Caco-2 (cell line): ENCODE measurements at regions of chr16 and their contacts with region 1.

Region 1: DNA sequence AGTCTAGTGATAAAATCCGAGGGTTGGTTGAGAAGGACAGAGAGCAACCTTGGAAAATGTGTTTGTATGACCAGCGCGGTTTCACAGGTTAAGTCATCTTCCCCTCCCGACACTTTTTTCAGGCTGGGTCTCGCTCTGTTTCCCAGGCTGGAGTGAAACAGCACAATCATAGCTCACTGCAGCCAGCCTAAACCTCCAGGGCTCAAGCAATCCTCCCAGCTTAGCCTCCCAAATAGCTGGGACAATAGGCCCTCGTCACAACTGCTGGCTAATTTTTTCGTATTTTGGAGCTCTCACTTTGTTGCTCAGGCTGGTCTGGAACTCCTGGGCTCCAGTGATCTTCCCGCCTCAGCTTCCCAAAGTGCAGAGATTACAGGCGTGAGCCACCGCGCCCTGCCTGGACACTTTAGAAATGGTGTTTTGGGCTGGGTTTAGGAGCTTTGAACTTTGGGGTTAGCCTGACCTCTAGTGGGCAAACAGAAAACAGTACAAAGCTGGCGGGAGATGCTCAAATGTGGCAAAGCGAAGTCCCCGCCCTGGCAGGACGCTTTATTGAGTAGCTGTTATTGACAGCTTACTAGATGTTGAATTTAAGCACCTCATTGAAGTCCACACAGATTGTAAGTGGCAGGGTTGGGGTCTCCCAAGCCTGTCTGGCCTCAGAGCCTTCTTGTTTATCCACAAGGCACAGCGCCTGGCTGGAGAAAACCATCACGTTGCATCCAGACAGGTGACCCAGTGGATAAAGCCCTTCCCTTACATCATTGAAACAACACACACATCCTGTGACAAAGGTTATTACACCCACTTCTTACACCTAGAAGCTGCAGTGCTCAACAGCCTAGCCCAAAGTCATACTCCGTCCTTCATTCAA is 34.7 kb upstream of the RBBP6 start:
- DNase-seq: peak; percentile 54 to 66
- H3K4me3 ChIP-seq: no peak overlapping the region
- H3K4me3 Mint-ChIP-seq: no peak overlapping the region
- H3K27ac Mint-ChIP-seq: no peak overlapping the region
- H3K4me1 ChIP-seq: peaks cover 5% of the 10 kb centered on the region; the same call in 1 of the 2 replicates
- H3K4me1 Mint-ChIP-seq: no peaks in the 10 kb centered on the region
- H3K27me3 ChIP-seq: no peaks in the 10 kb centered on the region
- H3K27me3 Mint-ChIP-seq: peaks cover 16% of the 10 kb centered on the region
- CTCF ChIP-seq: peak; percentile 78 to 83

Region 2: GRCh38 chr16:24041826-24042631 is 462.7 kb before region 1 on chr16:
- CTCF ChIA-PET with region 1: interaction called, 16 read pairs
- POLR2A ChIA-PET with region 1: no interaction called
- intact Hi-C with region 1: loop called (anchors 1 kb)
- DNase-seq: peak; percentile 56 to 73
- H3K4me3 ChIP-seq: no peak overlapping the region
- H3K4me3 Mint-ChIP-seq: no peak overlapping the region
- H3K27ac Mint-ChIP-seq: no peak overlapping the region
- H3K4me1 ChIP-seq: no peaks in the 10 kb centered on the region
- H3K4me1 Mint-ChIP-seq: no peaks in the 10 kb centered on the region
- H3K27me3 ChIP-seq: no peaks in the 10 kb centered on the region
- H3K27me3 Mint-ChIP-seq: peaks cover 2% of the 10 kb centered on the region
- CTCF ChIP-seq: peak; percentile 67 to 68

Region 3: DNA sequence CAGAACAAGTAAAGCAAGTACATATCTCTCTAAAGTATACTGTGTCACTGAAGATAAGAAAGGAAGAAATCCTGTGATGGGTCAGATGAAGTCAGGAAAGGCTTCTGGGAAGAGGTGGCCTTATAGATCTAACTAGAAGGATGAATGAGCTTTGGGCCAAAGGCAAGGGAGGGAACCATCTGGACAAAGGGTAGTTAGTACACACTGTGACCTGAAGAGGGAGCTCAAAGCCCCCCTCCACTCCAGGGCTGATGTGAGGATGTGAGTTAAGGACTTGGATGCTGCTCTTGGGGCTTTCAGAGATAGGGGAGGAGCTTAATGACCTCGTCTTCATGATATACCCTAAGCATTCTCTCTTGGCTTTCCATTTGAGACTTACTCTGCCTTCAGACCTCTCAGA is 433.9 kb before region 1 on chr16:
- CTCF ChIA-PET with region 1: interaction called, 11 read pairs
- POLR2A ChIA-PET with region 1: no interaction called
- intact Hi-C with region 1: no loop called
- DNase-seq: peak; percentile 11 to 38
- H3K4me3 ChIP-seq: no peak overlapping the region
- H3K4me3 Mint-ChIP-seq: no peak overlapping the region
- H3K27ac Mint-ChIP-seq: no peak overlapping the region
- H3K4me1 ChIP-seq: no peaks in the 10 kb centered on the region
- H3K4me1 Mint-ChIP-seq: no peaks in the 10 kb centered on the region
- H3K27me3 ChIP-seq: no peaks in the 10 kb centered on the region; the same call in 1 of the 2 replicates
- H3K27me3 Mint-ChIP-seq: peaks cover 10% of the 10 kb centered on the region
- CTCF ChIP-seq: peak; percentile 34 to 52

Region 4: GRCh38 chr16:24253192-24253591 is 251.5 kb before region 1 on chr16:
- CTCF ChIA-PET with region 1: interaction called, 5 read pairs
- POLR2A ChIA-PET with region 1: no interaction called
- intact Hi-C with region 1: loop called (anchors 5 kb)
- DNase-seq: peak; percentile 34 to 40
- H3K4me3 ChIP-seq: no peak overlapping the region
- H3K4me3 Mint-ChIP-seq: no peak overlapping the region
- H3K27ac Mint-ChIP-seq: no peak overlapping the region
- H3K4me1 ChIP-seq: peaks cover 3% of the 10 kb centered on the region; the same call in 1 of the 2 replicates
- H3K4me1 Mint-ChIP-seq: no peaks in the 10 kb centered on the region
- H3K27me3 ChIP-seq: no peaks in the 10 kb centered on the region
- H3K27me3 Mint-ChIP-seq: no peaks in the 10 kb centered on the region
- CTCF ChIP-seq: peak; percentile 53 to 85

Region 5: GRCh38 chr16:24309222-24309905 is 195.3 kb before region 1 on chr16:
- CTCF ChIA-PET with region 1: interaction called, 6 read pairs
- POLR2A ChIA-PET with region 1: no interaction called
- intact Hi-C with region 1: loop called (anchors 5 kb)
- DNase-seq: no peak
- H3K4me3 ChIP-seq: no peak overlapping the region
- H3K4me3 Mint-ChIP-seq: no peak overlapping the region
- H3K27ac Mint-ChIP-seq: no peak overlapping the region
- H3K4me1 ChIP-seq: no peaks in the 10 kb centered on the region
- H3K4me1 Mint-ChIP-seq: no peaks in the 10 kb centered on the region
- H3K27me3 ChIP-seq: no peaks in the 10 kb centered on the region
- H3K27me3 Mint-ChIP-seq: peaks cover 6% of the 10 kb centered on the region
- CTCF ChIP-seq: no peak

Region 6: DNA sequence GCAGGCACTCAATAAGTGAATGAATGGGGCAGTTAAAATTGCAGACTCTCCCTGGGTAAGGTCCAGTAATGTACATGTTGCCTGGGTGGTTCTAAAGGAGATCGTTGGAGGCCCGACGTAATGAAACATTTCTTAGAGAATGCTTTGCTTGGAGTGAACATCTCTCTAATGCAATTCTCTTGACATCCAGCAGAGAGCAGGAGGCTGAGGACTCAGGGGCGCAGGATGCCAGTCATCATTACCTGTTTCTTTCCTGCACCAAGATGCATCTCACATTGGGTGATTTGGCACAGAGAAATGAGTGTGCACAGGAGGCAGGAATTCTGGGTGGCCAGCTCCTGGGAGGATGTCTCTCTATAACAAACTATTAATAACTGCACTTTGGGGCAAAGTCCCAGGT is 95.7 kb before region 1 on chr16:
- CTCF ChIA-PET with region 1: interaction called, 4 read pairs
- POLR2A ChIA-PET with region 1: no interaction called
- intact Hi-C with region 1: loop called (anchors 1 kb)
- DNase-seq: peak in 1 of 2 experiments; percentile 7
- H3K4me3 ChIP-seq: no peak overlapping the region
- H3K4me3 Mint-ChIP-seq: no peak overlapping the region
- H3K27ac Mint-ChIP-seq: no peak overlapping the region
- H3K4me1 ChIP-seq: no peaks in the 10 kb centered on the region
- H3K4me1 Mint-ChIP-seq: no peaks in the 10 kb centered on the region
- H3K27me3 ChIP-seq: no peaks in the 10 kb centered on the region
- H3K27me3 Mint-ChIP-seq: no peaks in the 10 kb centered on the region
- CTCF ChIP-seq: peak in 1 of 2 experiments; percentile 31

Region 7: GRCh38 chr16:24729362-24729984 is 224.8 kb after region 1 on chr16 and contains the start of gene TNRC6A:
- CTCF ChIA-PET with region 1: no interaction called
- POLR2A ChIA-PET with region 1: no interaction called
- intact Hi-C with region 1: no loop called
- DNase-seq: peak; percentile 89 to 92
- H3K4me3 ChIP-seq: peak within 1 kb of the TSS; percentile 66
- H3K4me3 Mint-ChIP-seq: peak within 1 kb of the TSS; percentile 84
- H3K27ac Mint-ChIP-seq: peak within 1 kb of the TSS; percentile 86
- H3K4me1 ChIP-seq: peaks cover 12% of the 10 kb centered on the region
- H3K4me1 Mint-ChIP-seq: peaks cover 20% of the 10 kb centered on the region
- H3K27me3 ChIP-seq: no peaks in the 10 kb centered on the region
- H3K27me3 Mint-ChIP-seq: no peaks in the 10 kb centered on the region
- CTCF ChIP-seq: no peak
- total RNA-seq, gene TNRC6A: 39.3 and 43.7 TPM in 2 replicates